Natural killer cell (primary cell): ENCODE measurements at regions of chr2 and their contacts with region 1.

Region 1: GRCh38 chr2:222939208-222939856 is 78.5 kb downstream of the ACSL3 start:
- DNase-seq: peak; percentile 41 to 72
- ATAC-seq: peak; percentile 84 to 96 (median 94)
- H3K4me3 ChIP-seq: no peak overlapping the region
- H3K4me3 Mint-ChIP-seq: no peak overlapping the region
- H3K27ac ChIP-seq: no peak overlapping the region
- H3K27ac Mint-ChIP-seq: no peak overlapping the region
- H3K4me1 ChIP-seq: no peaks in the 10 kb centered on the region
- H3K4me1 Mint-ChIP-seq: no peaks in the 10 kb centered on the region
- H3K27me3 ChIP-seq: no peaks in the 10 kb centered on the region
- H3K27me3 Mint-ChIP-seq: no peaks in the 10 kb centered on the region
- CTCF ChIP-seq: peak; percentile 66

Region 2: DNA sequence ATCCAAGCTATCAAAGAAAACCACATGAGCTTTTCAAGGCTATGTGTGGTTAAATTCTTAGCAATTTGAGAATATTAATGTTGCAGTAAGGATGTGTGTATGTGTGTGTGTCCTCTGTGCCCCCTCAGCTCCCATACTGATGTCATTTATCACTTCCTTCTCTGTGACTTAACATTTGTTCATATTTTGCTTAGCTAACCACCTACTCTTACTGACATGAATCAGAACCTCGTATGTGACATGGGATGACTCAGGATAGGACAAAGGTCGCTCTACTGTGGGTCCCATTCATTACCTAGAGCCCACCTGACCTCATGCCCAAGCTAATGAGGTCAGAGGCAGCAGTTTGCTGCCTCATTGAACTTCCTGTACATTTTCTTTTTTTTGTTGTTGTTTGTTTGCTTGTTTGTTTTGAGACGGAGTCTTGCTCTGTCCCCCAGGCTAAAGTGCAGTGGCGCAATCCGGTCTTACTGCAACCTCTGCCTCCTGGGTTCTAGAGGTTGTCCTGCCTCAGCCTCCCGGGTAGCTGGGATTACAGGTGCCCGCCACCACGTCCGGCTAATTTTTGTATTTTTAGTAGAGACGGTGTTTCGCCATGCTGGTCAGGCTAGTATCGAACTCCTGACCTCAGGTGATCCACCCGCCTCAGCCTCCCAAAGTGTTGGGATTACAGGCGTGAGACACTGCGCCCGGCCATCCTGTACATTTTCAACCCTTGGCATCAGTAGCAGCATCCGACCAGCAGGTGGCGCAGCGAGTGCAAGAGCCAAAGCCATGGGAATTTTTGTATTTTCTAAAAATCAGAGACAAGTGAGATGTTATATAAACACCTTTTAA is 231.4 kb before region 1 on chr2:
- intact Hi-C with region 1: loop called (anchors 1 kb)
- DNase-seq: peak; percentile 70 to 84
- ATAC-seq: peak; percentile 72 to 78 (median 74)
- H3K4me3 ChIP-seq: no peak overlapping the region
- H3K4me3 Mint-ChIP-seq: no peak overlapping the region
- H3K27ac ChIP-seq: no peak overlapping the region
- H3K27ac Mint-ChIP-seq: peak overlapping the region in 1 of 2 donors; percentile 10
- H3K4me1 ChIP-seq: peaks cover 9% of the 10 kb centered on the region
- H3K4me1 Mint-ChIP-seq: peaks cover 6 to 12% of the 10 kb centered on the region in 2 donors
- H3K27me3 ChIP-seq: peaks cover 5% of the 10 kb centered on the region
- H3K27me3 Mint-ChIP-seq: peaks cover 16% of the 10 kb centered on the region in 2 donors
- CTCF ChIP-seq: peak; percentile 98

Region 3: GRCh38 chr2:222900354-222900753 is 39.0 kb before region 1 on chr2:
- intact Hi-C with region 1: no loop called
- DNase-seq: no peak
- ATAC-seq: no peak
- H3K4me3 ChIP-seq: no peak overlapping the region
- H3K4me3 Mint-ChIP-seq: no peak overlapping the region
- H3K27ac ChIP-seq: no peak overlapping the region
- H3K27ac Mint-ChIP-seq: peak overlapping the region; percentile 1 to 19
- H3K4me1 ChIP-seq: no peaks in the 10 kb centered on the region
- H3K4me1 Mint-ChIP-seq: peaks cover 25 to 33% of the 10 kb centered on the region in 2 donors
- H3K27me3 ChIP-seq: no peaks in the 10 kb centered on the region
- H3K27me3 Mint-ChIP-seq: no peaks in the 10 kb centered on the region
- CTCF ChIP-seq: no peak